Endothelial cell of umbilical vein (primary cell): ENCODE measurements at regions of chr10 and their contacts with region 1.

Region 1: DNA sequence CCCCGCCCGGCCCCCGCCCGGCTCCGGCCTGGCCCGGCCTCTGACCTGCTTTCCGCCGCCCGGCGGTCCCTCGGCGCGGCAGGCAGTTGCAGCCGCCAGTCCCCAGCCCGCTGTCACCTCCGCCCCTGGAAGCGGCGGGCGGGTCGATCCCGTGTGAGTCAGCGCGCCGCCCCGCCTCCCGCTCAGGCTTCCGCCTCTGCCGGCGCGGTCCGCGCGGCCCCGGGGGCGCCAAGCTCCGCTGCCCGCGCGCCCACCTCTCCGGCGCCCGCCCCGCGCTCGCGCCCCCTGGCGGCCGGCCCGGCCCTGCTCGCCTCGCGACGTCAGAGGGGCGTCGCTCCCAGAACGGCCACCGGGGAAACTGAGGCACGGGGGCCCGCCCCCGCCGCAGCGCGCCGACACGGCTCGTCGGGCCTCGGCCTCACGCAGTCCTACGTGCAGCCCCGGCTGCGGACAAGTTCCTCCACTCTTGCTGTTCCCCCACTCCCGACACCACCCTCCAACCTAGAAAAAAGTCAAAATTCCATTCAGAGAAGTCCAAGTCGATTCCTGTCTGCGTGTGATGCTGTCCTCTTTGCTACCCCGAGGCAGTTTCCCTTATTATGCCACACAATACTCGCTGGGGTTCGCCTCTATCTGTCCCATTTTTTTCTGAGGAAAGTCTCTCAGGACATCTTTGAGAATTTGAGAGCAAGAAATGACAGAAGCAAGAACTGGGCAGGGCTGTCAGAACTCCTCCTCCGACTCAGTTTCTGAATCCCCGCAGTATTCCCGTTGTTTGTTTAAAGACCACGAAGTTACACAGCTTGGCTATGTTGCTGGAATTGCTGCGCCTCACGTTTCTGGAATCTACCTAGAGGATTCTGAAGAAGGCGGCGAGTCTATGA is at the start of gene DNMBP:
- DNase-seq: peak; percentile 83
- H3K4me3 ChIP-seq: peak within 1 kb of the TSS; percentile 75 to 99 (median 96)
- H3K27ac ChIP-seq: peak within 1 kb of the TSS; percentile 83
- H3K4me1 ChIP-seq: peaks cover 31% of the 10 kb centered on the region
- H3K27me3 ChIP-seq: no peaks in the 10 kb centered on the region
- CTCF ChIP-seq: peak; percentile 37 to 63
- POLR2A ChIP-seq: peak; percentile 74
- total RNA-seq, gene DNMBP: 53.4 and 56.1 TPM in 2 replicates

Region 2: DNA sequence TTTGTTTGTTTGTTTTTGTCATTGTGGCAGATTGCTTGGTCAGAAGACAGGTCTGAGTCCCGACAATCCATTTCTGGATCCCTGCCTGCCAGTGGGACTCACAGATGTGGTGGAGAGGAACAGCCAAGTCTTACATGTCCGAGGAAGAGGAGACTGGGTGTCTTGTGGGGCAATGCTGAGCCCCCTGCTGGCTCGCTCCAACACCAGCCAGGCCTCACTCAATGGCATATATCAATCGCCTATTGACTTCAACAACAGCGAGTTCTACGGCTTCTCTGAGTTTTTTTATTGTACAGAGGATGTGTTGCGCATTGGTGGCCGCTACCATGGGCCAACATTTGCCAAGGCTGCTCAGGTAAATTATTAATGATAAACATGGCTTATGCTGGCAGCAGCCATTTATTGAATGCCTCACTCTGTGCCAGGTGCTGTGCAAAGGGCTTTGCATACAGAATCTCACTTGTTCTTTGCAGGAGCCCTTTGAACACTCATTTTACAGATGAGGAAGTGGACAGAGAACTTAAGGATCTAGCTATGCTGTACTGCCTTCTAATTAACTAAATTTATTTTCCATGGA is 311.4 kb before region 1 on chr10:
- CTCF ChIA-PET with region 1: no interaction called
- POLR2A ChIA-PET with region 1: no interaction called
- dilution Hi-C with region 1: no loop called
- intact Hi-C with region 1: no loop called
- DNase-seq: peak; percentile 7
- H3K4me3 ChIP-seq: no peak overlapping the region
- H3K27ac ChIP-seq: no peak overlapping the region
- H3K4me1 ChIP-seq: no peaks in the 10 kb centered on the region
- H3K27me3 ChIP-seq: no peaks in the 10 kb centered on the region
- CTCF ChIP-seq: peak; percentile 11 to 27
- POLR2A ChIP-seq: no peak

Region 3: DNA sequence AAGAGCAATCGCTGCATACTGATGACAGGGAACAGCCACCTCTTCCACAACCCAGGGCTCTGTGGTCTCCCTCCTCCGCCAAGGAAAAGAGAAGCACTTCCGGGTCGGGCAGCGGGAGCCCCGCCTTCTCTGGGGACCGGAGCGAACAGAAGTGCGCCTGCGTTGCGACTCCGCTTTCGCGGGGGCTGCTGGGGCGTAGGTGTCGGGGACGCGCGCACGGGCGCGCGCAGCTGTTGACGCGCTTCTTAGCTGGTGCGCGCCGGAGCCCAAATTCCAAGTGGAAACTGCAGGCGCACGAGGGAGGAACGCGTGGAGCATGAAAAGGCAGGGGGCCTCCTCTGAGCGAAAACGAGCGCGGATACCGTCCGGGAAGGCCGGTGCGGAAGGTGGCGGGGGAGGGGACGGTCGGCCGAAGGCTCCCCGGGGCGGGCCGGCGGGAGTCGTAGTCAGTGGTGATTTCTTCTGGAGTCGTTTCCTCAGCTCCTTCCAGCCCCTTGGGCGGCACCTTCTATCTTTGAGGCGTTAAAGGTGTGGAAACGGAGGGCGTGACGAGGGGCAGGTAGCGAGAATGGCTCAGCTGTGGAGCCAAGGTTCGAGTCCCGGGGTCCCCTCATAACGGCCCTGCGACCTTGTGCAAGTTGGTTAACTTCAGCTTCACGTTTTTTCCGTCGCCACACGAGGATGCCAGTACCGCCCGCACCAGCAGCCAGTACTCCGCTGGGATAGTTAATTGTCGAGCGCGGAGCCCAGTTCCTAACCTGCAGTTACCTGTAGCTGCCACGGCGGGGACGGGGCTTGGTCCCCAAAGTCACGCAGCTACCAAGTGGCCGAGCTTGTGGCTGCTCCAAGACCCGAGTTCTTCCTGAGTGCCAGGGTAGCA is 277.8 kb before region 1 on chr10 and contains the starts of genes COX15 and CUTC:
- CTCF ChIA-PET with region 1: interaction called, 5 read pairs
- POLR2A ChIA-PET with region 1: no interaction called
- dilution Hi-C with region 1: no loop called
- intact Hi-C with region 1: loop called (anchors 1 kb)
- DNase-seq: peak; percentile 98
- H3K4me3 ChIP-seq: peak within 1 kb of the TSS; percentile 48 to 90 (median 65)
- H3K27ac ChIP-seq: peak within 1 kb of the TSS; percentile 53
- H3K4me1 ChIP-seq: peaks cover 15% of the 10 kb centered on the region
- H3K27me3 ChIP-seq: no peaks in the 10 kb centered on the region
- CTCF ChIP-seq: peak; percentile 33 to 54
- POLR2A ChIP-seq: peak; percentile 86
- total RNA-seq, gene COX15: 31.7 and 34.6 TPM in 2 replicates
- total RNA-seq, gene CUTC: 17.7 and 20.4 TPM in 2 replicates

Region 4: GRCh38 chr10:99880080-99880835 is 129.8 kb before region 1 on chr10:
- CTCF ChIA-PET with region 1: interaction called, 13 read pairs
- POLR2A ChIA-PET with region 1: no interaction called
- dilution Hi-C with region 1: no loop called
- intact Hi-C with region 1: no loop called
- DNase-seq: peak; percentile 81
- H3K4me3 ChIP-seq: no peak overlapping the region
- H3K27ac ChIP-seq: peak overlapping the region; percentile 72
- H3K4me1 ChIP-seq: peaks cover 22% of the 10 kb centered on the region
- H3K27me3 ChIP-seq: no peaks in the 10 kb centered on the region
- CTCF ChIP-seq: no peak
- POLR2A ChIP-seq: no peak

Region 5: GRCh38 chr10:99926925-99927720 is 82.9 kb before region 1 on chr10:
- CTCF ChIA-PET with region 1: interaction called, 31 read pairs
- POLR2A ChIA-PET with region 1: interaction called, 5 read pairs
- dilution Hi-C with region 1: no loop called
- intact Hi-C with region 1: loop called (anchors 1 kb)
- DNase-seq: peak; percentile 91
- H3K4me3 ChIP-seq: peak overlapping the region; percentile 40 to 64 (median 40)
- H3K27ac ChIP-seq: peak overlapping the region; percentile 73
- H3K4me1 ChIP-seq: peaks cover 77% of the 10 kb centered on the region
- H3K27me3 ChIP-seq: no peaks in the 10 kb centered on the region
- CTCF ChIP-seq: no peak
- POLR2A ChIP-seq: peak; percentile 78

Region 6: GRCh38 chr10:99976886-99977665 is 33.0 kb before region 1 on chr10:
- CTCF ChIA-PET with region 1: interaction called, 21 read pairs
- POLR2A ChIA-PET with region 1: interaction called, 3 read pairs
- dilution Hi-C with region 1: no loop called
- intact Hi-C with region 1: loop called (anchors 1 kb)
- DNase-seq: peak; percentile 87
- H3K4me3 ChIP-seq: peak overlapping the region in 1 of 3 experiments; percentile 12
- H3K27ac ChIP-seq: peak overlapping the region; percentile 69
- H3K4me1 ChIP-seq: peaks cover 57% of the 10 kb centered on the region
- H3K27me3 ChIP-seq: no peaks in the 10 kb centered on the region
- CTCF ChIP-seq: no peak
- POLR2A ChIP-seq: no peak

Region 7: GRCh38 chr10:99999319-100000108 is 10.5 kb before region 1 on chr10:
- CTCF ChIA-PET with region 1: interaction called, 29 read pairs
- POLR2A ChIA-PET with region 1: interaction called, 9 read pairs
- dilution Hi-C with region 1: no loop called
- intact Hi-C with region 1: loop called (anchors 1 kb)
- DNase-seq: no peak
- H3K4me3 ChIP-seq: no peak overlapping the region
- H3K27ac ChIP-seq: no peak overlapping the region
- H3K4me1 ChIP-seq: peaks cover 57% of the 10 kb centered on the region
- H3K27me3 ChIP-seq: no peaks in the 10 kb centered on the region
- CTCF ChIP-seq: no peak
- POLR2A ChIP-seq: no peak